Mammary epithelial cell (primary cell): ENCODE measurements at regions of chr12 and their contacts with region 1.

Region 1: DNA sequence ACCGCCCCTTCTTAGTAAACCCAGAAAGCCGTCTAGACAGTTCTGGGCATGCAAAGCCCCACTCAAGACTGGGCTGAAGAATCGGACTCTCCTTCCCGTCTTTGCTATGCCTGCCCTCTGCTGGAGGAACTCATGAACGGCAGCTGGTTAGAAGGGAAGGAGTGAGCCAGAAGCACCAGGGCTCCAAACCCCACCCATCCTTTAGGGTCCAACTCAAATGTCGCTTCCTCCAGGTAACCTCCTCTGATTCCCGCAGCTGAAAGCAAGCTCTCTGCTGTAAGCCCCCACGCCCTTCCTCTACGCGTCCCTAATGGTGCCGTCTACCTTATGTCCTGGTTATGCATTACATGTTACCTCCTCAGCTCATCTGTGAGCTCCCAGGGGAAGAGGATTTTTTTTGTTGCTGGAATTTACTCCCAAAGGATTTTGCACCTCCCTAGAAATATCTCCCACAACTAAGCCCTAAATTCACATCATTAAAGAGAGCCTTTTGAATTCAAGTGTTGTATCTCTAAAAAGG is 59.0 kb upstream of the SCN8A start:
- DNase-seq: peak; percentile 57
- H3K4me3 ChIP-seq: no peak overlapping the region
- H3K27ac ChIP-seq: no peak overlapping the region
- H3K4me1 ChIP-seq: no peaks in the 10 kb centered on the region
- H3K27me3 ChIP-seq: no peaks in the 10 kb centered on the region
- CTCF ChIP-seq: peak; percentile 81 to 93

Region 2: GRCh38 chr12:51005740-51006139 is 526.3 kb before region 1 on chr12:
- CTCF ChIA-PET with region 1: interaction called, 11 read pairs
- dilution Hi-C with region 1: no loop called
- in situ Hi-C with region 1: no loop called
- intact Hi-C with region 1: no loop called
- DNase-seq: peak; percentile 31
- H3K4me3 ChIP-seq: no peak overlapping the region
- H3K27ac ChIP-seq: no peak overlapping the region
- H3K4me1 ChIP-seq: peaks cover 6% of the 10 kb centered on the region
- H3K27me3 ChIP-seq: no peaks in the 10 kb centered on the region
- CTCF ChIP-seq: no peak

Region 3: DNA sequence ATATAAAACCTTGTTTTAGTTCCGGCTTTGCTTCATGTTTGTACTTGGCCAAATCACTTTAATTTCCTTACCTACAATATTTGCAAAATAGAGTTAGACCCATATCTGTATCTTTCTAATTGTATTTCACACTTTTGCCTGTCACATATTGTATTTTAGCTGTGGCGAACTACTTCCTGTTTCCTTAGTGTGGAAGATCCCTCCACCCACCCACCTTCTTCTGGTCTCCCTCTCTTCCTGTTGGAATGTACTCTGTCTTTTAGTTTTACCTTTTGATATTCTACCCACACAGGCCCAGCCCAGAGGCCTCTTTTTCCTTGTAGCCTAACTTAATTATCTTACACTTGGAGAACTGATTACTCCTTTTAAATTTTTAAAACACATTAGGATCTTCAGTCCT is 137.2 kb after region 1 on chr12:
- CTCF ChIA-PET with region 1: interaction called, 14 read pairs
- dilution Hi-C with region 1: no loop called
- in situ Hi-C with region 1: no loop called
- intact Hi-C with region 1: no loop called
- DNase-seq: no peak
- H3K4me3 ChIP-seq: no peak overlapping the region
- H3K27ac ChIP-seq: no peak overlapping the region
- H3K4me1 ChIP-seq: peaks cover 14% of the 10 kb centered on the region
- H3K27me3 ChIP-seq: no peaks in the 10 kb centered on the region
- CTCF ChIP-seq: no peak

Region 4: DNA sequence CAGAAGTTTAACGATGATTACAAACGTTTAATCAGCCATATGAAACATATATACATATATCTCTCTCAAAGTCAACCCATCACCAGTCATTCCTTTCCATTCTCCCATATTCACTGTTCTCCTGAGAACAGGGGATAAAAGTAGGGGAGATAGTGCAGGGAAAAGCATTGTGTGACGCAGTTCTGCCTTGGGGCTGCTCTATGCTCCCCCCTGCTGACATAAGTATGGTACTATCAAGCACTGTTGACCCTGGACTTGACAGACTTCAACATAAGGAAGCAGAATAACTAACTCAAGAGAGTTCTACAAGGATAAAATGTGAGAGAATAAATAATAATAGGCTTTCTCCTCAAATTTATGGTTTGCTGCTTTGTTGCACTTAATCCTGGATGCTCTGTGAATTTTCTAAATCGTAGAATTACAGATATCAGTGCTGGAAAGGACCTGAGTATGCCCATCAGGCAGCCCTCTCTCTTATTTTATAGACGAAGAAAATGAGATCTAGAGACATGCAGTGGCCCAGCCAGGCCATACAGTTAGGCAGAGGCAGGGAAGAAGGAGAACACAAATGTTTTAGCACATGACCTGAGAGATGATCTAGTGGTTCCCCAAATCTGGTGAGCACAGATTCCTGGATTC is 146.2 kb after region 1 on chr12:
- CTCF ChIA-PET with region 1: interaction called, 3 read pairs
- dilution Hi-C with region 1: no loop called
- in situ Hi-C with region 1: no loop called
- intact Hi-C with region 1: loop called (anchors 1 kb)
- DNase-seq: peak; percentile 31
- H3K4me3 ChIP-seq: no peak overlapping the region
- H3K27ac ChIP-seq: no peak overlapping the region
- H3K4me1 ChIP-seq: peaks cover 1% of the 10 kb centered on the region
- H3K27me3 ChIP-seq: no peaks in the 10 kb centered on the region
- CTCF ChIP-seq: peak; percentile 90 to 93

Region 5: GRCh38 chr12:51814311-51815088 is 282.5 kb after region 1 on chr12:
- CTCF ChIA-PET with region 1: no interaction called
- dilution Hi-C with region 1: no loop called
- in situ Hi-C with region 1: no loop called
- intact Hi-C with region 1: loop called (anchors 2 kb)
- DNase-seq: peak; percentile 18
- H3K4me3 ChIP-seq: peak overlapping the region in 2 of 3 experiments; percentile 40 to 43
- H3K27ac ChIP-seq: no peak overlapping the region
- H3K4me1 ChIP-seq: peaks cover 4% of the 10 kb centered on the region
- H3K27me3 ChIP-seq: peaks cover 2% of the 10 kb centered on the region
- CTCF ChIP-seq: peak; percentile 44 to 68

Region 6: DNA sequence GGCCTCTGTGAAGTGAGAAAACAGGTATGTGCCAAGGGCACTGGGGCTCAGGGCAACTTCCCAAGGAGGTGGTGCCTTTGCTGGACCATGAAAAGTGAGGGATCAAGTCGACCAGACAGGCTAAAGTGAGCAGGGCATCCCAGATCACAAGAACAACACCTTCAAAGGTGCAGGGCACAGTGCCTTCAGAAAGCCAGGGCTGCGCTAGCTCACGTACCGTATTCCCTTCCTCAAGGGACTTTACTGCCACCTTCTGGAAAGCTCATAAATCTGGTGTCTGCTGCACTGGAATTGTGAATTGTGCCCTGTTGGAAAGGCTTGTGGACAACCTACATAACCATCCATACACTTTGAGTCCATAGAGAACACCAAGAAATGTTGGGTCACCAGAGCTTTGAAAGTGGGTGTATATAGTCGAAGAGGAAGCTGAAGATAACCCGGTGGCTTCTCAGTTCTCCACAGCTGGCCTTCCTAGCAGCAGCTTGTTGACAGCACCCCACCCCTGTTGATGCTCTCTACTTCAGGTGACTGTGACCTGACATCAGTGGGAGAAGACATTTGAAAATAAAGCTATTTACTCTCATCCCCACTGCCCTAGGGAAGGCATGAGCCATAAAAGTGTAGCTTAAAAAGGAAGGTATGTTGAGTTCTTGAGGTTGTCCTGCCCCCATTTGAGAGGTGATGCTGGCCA is 292.0 kb after region 1 on chr12:
- CTCF ChIA-PET with region 1: interaction called, 4 read pairs
- dilution Hi-C with region 1: no loop called
- in situ Hi-C with region 1: loop called in 1 of 2 experiments (anchors 10 kb)
- intact Hi-C with region 1: loop called (anchors 1 kb)
- DNase-seq: peak; percentile 57
- H3K4me3 ChIP-seq: no peak overlapping the region
- H3K27ac ChIP-seq: no peak overlapping the region
- H3K4me1 ChIP-seq: peaks cover 30% of the 10 kb centered on the region
- H3K27me3 ChIP-seq: peaks cover 5% of the 10 kb centered on the region
- CTCF ChIP-seq: peak; percentile 39 to 76

Region 7: DNA sequence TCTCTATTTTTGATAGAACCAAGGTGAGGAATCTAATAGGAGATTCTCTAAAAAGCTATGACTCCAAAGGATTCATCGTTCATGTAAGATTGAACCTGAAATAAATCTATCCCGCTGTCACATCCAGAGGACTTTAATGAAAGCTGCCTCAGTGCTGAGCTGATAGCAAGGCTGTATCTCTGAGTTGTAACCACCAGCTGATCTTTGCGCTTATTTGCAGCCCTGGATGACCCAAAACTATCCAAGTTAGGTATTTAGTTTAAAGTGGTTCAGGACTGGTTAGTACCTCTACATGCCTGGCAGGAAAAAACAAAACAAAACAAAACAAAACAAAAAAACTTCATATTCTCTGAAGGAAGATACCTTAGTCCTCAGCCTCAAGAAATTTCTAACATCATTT is 347.1 kb after region 1 on chr12:
- CTCF ChIA-PET with region 1: no interaction called
- dilution Hi-C with region 1: no loop called
- in situ Hi-C with region 1: no loop called
- intact Hi-C with region 1: loop called (anchors 5 kb)
- DNase-seq: no peak
- H3K4me3 ChIP-seq: no peak overlapping the region
- H3K27ac ChIP-seq: no peak overlapping the region
- H3K4me1 ChIP-seq: no peaks in the 10 kb centered on the region
- H3K27me3 ChIP-seq: no peaks in the 10 kb centered on the region
- CTCF ChIP-seq: no peak